Heart right ventricle (tissue), 16 donors: ENCODE measurements at regions of chr5 and their contacts with region 1.

Region 1: DNA sequence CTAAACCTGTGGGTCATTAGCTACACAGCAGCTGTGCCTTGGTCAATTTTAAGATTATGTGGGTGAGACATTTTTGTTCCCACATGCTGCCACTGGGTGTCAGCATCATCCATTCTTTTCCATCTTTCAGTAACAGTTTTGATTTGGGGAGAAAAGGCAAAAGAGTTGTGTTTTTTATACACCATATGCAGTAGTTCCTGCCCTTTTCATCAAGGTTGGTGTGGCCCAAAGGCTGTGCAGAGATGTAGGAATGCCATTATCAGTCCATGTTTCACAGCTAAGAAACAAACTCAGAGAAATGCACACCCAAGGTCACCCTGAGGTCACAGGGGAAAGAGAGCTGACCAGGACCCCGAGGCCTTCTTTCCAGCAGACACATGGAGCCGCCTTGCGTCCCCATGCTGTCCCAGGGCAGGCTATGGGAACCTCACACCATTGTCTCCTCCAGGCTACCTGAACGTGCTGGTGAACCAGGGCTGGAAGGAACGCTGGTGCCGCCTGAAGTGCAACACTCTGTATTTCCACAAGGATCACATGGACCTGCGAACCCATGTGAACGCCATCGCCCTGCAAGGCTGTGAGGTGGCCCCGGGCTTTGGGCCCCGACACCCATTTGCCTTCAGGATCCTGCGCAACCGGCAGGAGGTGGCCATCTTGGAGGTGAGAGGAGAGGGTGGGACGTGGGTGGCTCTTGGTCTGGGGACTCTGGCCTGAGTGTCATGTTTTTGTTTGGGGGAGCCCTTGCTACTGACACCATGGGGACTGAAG is 27.8 kb upstream of the GRPEL2 start:
- DNase-seq: no peak
- ATAC-seq: no peak
- H3K4me3 ChIP-seq: no peak overlapping the region
- H3K27ac ChIP-seq: peak overlapping the region in 9 of 10 donors; percentile 3 to 89 (median 68)
- H3K4me1 ChIP-seq: peaks cover 0 to 58% (median 33%) of the 10 kb centered on the region in 9 donors
- H3K27me3 ChIP-seq: no peaks in the 10 kb centered on the region
- CTCF ChIP-seq: peak; percentile 29 to 73 (median 63)

Region 2: DNA sequence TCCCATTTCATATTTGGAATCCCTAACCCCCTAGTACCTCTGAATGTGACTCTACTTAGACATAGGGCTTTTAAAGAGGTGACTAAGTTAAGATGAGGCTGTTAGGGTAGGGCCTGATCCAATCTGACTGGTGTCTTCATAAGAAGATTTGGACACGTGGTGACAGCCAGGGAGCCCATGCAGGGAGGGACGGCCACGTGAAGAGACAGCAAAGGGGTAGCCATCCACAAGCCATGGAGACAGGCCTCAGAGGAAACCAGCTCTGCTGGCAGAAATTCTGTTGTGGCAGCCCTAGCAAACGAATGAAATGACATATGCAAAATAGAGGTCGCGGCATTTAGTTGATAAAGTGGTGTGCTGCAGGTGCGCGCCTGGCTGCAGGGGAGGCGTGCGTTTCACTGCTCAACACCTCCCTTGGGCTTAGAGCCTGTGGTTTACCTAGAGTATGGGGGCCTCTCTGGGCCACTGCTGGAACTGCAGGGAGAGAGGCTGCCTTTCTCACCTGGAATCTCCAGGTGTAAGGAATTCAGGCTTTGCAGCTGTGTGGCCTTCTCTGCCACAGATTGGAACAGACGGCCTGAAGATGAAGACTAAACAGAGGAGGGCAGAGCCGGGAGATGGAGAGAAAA is 52.9 kb before region 1 on chr5:
- intact Hi-C with region 1: no loop called
- DNase-seq: no peak
- ATAC-seq: peak in 2 of 8 donors; percentile 41 to 54
- H3K4me3 ChIP-seq: no peak overlapping the region
- H3K27ac ChIP-seq: no peak overlapping the region
- H3K4me1 ChIP-seq: peaks cover 0 to 34% (median 8%) of the 10 kb centered on the region in 9 donors
- H3K27me3 ChIP-seq: peaks cover 0 to 3% (median 0%) of the 10 kb centered on the region in 7 donors
- CTCF ChIP-seq: peak; percentile 10 to 52 (median 42)

Region 3: DNA sequence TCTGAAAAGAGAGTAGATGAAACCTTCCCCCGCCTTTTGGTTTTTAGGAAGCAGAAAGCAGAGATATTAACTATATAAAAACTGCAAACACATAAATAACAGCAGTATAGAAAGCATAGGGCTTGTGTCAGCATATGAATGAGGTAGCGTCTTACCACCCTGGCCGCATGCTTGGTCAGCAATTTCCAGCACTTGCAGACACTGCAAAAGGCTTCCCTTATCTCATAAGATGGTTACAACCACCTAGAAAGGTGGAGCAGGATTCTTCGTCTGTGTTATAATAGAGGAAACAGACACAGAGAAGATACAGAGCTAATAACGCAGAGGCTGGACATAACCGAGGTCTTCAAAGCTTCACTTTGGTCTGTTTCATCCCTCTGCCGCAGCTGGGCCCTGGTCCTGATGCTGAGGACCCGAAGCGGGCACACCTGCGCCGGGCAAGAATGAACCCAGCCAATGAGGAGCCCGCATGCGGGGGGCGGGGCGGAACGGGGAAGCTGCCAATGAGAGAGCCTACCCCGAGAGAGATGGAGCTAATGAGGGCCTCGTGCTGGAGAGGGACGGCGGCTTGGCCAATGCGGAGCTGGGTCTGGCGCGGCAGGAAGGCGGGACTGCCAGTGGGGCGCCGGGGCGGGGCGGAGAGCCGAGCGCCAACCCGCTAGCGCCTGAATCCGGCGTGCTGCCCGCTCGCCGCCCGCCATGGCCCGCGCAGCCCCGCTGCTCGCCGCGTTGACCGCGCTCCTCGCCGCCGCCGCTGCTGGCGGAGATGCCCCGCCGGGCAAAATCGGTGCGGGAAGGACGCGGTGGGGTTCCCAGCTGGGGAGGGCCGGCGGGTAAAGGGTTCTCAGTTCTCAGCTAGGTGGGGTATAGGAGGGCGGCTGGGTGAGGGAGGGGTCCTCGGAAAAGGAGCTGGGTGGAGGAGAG is 40.2 kb after region 1 on chr5 and contains the start of gene PCYOX1L:
- intact Hi-C with region 1: loop called in 3 of 10 experiments (anchors 5 kb)
- DNase-seq: peak; percentile 96
- ATAC-seq: peak; percentile 98 to 100 (median 100)
- H3K4me3 ChIP-seq: peak within 1 kb of the TSS; percentile 72 to 90 (median 76)
- H3K27ac ChIP-seq: peak within 1 kb of the TSS in 9 of 10 donors; percentile 52 to 87 (median 73)
- H3K4me1 ChIP-seq: peaks cover 3 to 27% (median 12%) of the 10 kb centered on the region in 9 donors
- H3K27me3 ChIP-seq: no peaks in the 10 kb centered on the region
- CTCF ChIP-seq: no peak
- total RNA-seq, gene PCYOX1L: 2.6 to 5.5 (median 4.0) TPM

Region 4: DNA sequence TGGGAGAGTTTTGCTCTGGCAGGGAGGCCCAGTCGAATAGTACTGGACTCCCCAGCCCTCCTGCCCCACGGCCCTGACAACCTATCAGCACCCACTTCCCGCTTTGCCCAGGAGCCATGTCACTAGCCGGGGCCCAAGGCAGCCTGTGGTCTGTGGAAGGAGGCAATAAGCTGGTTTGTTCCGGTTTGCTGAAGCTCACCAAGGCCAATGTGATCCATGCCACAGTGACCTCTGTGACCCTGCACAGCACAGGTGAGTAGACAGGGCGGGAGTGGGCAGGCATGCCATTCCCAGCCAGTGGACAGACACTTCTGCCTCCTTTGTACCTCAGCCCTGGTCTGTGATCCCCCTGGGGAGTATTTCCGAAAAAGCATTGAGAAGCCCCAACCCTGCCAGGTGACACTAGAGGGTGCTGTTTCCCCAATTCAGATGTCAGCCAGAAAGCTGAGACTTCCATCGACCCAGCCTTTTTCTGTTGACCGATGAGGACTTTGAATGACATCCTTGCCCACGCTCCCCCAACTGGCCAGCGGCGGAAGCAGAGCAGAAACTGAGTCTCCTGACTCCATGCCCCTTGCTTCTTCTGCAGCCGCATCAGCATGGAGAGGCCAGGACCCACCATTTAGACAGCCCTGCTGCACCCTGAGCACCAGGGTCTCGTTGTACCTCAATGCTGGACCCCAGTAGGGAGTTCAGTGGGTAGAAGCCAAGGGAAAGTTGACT is 49.9 kb after region 1 on chr5:
- intact Hi-C with region 1: loop called in 6 of 10 experiments (anchors 2 to 5 kb)
- DNase-seq: peak; percentile 37 to 75
- ATAC-seq: peak; percentile 43 to 66 (median 57)
- H3K4me3 ChIP-seq: no peak overlapping the region
- H3K27ac ChIP-seq: no peak overlapping the region
- H3K4me1 ChIP-seq: peaks cover 0 to 35% (median 12%) of the 10 kb centered on the region in 9 donors
- H3K27me3 ChIP-seq: no peaks in the 10 kb centered on the region
- CTCF ChIP-seq: peak; percentile 61 to 86 (median 82)

Region 5: GRCh38 chr5:149561848-149562247 is 244.4 kb after region 1 on chr5:
- intact Hi-C with region 1: loop called in 2 of 10 experiments (anchors 5 kb)
- DNase-seq: peak in 1 of 2 donors; percentile 34
- ATAC-seq: peak; percentile 60 to 95 (median 90)
- H3K4me3 ChIP-seq: peak overlapping the region in 5 of 10 donors; percentile 5 to 24 (median 20)
- H3K27ac ChIP-seq: peak overlapping the region; percentile 5 to 94 (median 84)
- H3K4me1 ChIP-seq: peaks cover 6 to 47% (median 39%) of the 10 kb centered on the region in 9 donors
- H3K27me3 ChIP-seq: no peaks in the 10 kb centered on the region
- CTCF ChIP-seq: no peak

Region 6: DNA sequence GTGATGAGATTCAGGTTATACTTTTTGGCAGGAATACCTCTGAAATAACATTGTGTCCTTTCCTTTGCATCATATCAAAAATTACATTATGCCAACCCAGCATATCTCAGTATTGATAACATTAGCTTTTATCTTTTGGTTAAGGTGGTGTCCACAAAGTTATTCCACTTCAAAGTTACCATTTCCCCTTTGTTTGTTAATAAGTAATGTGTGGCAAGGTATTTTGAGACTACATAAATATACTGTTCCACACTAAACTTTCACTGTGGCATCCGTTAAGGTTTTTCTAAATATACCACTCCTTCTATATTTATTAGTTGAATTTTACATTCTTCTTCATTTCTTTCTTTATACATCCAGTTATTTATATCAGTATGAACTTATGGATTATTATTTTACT is 249.8 kb after region 1 on chr5:
- intact Hi-C with region 1: loop called in 2 of 10 experiments (anchors 5 kb)
- DNase-seq: no peak
- ATAC-seq: no peak
- H3K4me3 ChIP-seq: no peak overlapping the region
- H3K27ac ChIP-seq: no peak overlapping the region
- H3K4me1 ChIP-seq: peaks cover 0 to 27% (median 22%) of the 10 kb centered on the region in 9 donors
- H3K27me3 ChIP-seq: no peaks in the 10 kb centered on the region
- CTCF ChIP-seq: no peak